ENCODE measurements at regions of chr5 and their contacts with region 1.

Region 1: DNA sequence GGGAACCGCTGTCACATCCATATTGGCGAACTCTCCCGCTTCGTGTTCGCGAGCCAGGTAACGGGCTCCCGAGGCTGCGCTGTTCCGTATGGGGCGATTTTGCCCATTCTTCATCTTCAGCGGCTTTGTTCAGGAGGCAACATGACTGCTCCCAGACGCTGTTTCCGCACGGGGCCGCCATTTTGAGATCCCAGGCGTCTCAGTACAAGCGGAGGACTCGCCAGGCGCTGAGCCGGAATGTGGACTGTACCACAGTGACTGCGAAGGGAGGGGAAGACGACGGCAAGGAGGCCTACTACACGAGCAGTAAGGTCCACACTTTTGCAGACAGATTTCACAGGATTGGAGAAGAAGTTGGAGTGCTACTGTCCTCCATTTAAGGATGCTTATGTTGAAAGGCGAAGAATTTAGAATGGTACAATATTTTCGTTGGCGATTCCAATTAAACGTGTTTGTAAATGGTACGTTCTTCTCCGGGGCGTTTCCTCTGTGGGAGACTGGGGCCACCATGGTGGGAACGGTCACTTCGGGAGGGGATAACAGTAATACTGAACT is 41.6 kb upstream of the ZNF300 start:
- DNase-seq: no peak
- ATAC-seq: no peak
- H3K4me3 ChIP-seq: no peak overlapping the region
- H3K27ac ChIP-seq: no peak overlapping the region
- H3K4me1 ChIP-seq: no peaks in the 10 kb centered on the region
- H3K27me3 ChIP-seq: no peaks in the 10 kb centered on the region
- CTCF ChIP-seq: no peak

Region 2: GRCh38 chr5:150895431-150896428 is 50.7 kb before region 1 on chr5:
- CTCF ChIA-PET with region 1: no interaction called
- POLR2A ChIA-PET with region 1: no interaction called
- in situ Hi-C with region 1: no loop called
- intact Hi-C with region 1: loop called (anchors 10 kb)
- DNase-seq: no peak
- ATAC-seq: no peak
- H3K4me3 ChIP-seq: no peak overlapping the region
- H3K27ac ChIP-seq: no peak overlapping the region
- H3K4me1 ChIP-seq: no peaks in the 10 kb centered on the region
- H3K27me3 ChIP-seq: no peaks in the 10 kb centered on the region
- CTCF ChIP-seq: no peak

Region 3: DNA sequence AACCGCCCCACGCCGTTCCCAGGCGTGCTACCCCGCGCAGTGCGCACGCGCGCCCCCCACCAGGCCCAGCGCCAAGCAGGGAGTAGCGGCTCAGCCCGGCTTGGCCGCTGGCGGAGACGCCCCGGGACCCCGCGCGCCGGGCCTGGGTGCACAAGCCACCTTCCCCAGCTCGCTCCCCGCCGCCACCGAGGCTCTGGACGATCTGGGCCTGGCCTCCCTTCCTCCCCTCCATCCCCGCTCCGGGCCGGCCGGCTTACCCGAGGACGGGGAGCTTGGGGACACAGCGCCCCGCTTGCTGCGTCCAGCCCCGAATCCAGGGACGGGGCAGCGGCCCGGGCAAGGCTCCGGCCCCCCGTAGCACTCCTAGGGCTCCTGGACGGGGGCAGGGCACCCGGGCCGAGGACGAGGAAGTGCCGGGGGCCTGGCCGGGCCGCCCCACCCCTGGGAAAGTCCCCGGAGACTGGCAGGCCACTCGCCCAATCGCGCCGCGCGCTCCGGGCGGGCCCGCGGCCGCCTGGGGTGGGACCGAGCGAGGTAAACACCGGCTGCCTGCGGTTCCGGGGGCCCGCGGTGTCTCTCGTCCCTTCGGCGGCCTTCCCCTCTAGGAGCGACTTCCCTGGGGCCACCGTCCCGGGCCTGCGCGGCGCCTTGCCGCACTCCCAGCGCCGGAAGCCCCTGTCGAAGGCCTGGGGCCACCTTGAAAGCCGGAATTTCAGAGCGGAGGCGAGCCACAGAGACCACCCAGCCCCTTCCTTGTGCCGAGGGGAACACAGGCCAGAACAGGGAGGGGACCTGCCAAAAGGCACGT is 134.4 kb after region 1 on chr5 and contains the start of gene TNIP1:
- CTCF ChIA-PET with region 1: no interaction called
- POLR2A ChIA-PET with region 1: no interaction called
- in situ Hi-C with region 1: no loop called
- intact Hi-C with region 1: no loop called
- DNase-seq: no peak
- ATAC-seq: peak; percentile 96
- H3K4me3 ChIP-seq: peak within 1 kb of the TSS; percentile 83 to 95
- H3K27ac ChIP-seq: peak within 1 kb of the TSS; percentile 85
- H3K4me1 ChIP-seq: peaks cover 25% of the 10 kb centered on the region
- H3K27me3 ChIP-seq: no peaks in the 10 kb centered on the region
- CTCF ChIP-seq: no peak
- total RNA-seq, gene TNIP1: 81.9 TPM